ENCODE measurements at regions of chr3 and their contacts with region 1.

Region 1: DNA sequence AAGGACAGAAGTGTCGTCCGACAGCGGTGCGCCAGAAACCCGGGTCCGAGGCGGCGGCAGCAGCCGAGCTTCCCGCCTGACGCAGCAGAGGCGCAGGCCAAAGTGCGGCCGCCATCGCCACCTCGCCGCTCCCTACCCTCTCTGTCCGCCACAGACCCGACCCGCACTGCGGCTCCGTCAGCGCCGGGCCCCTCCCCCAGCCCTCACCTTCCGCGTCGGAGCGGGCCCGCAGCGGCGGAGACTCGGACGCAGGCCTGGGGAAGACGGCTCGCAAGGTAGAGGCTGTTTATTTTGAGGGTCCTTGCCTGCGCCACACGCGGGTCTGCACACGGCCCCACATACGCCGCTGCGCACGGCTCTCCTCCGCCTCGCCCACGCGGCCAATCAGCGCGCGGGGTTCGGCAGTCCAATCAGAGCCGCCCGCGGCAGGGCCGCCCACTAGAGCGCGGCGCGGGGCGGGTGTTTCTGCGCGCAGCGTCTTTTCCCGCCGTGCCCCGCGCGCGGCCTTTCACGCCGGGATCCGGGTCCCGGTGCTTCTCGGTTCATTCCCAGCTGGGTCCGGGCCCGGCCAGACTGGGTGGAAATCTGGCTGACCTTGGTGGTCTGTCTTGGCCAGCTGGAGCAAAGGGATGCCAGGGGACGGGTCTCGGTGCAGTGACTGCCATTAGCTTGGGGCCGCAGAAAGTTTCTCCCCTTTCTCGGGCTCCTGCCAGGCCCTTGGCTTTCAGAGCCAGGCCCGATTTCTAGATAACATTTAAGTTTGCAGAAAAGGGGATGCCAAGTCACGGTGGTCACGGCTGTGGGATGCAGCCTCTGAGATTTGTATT is at the start of gene CNBP:
- DNase-seq: peak; percentile 87 to 96 (median 93)
- ATAC-seq: peak; percentile 95 to 97
- H3K4me3 Mint-ChIP-seq: peak within 1 kb of the TSS; percentile 91 to 99 (median 96)
- H3K27ac Mint-ChIP-seq: peak within 1 kb of the TSS; percentile 92 to 100 (median 98)
- H3K4me1 Mint-ChIP-seq: peaks cover 14 to 50% (median 37%) of the 10 kb centered on the region in 4 donors
- H3K27me3 Mint-ChIP-seq: no peaks in the 10 kb centered on the region
- polyA plus RNA-seq, gene CNBP: 843 to 960 (median 927) TPM

Region 2: GRCh38 chr3:129160891-129161859 is 22.6 kb before region 1 on chr3 and contains the start of gene ISY1:
- POLR2A ChIA-PET with region 1: interaction called, 44 read pairs
- DNase-seq: peak; percentile 74 to 93 (median 87)
- ATAC-seq: peak; percentile 80 to 81
- H3K4me3 Mint-ChIP-seq: peak within 1 kb of the TSS; percentile 96 to 100 (median 98)
- H3K27ac Mint-ChIP-seq: peak within 1 kb of the TSS; percentile 98 to 100 (median 99)
- H3K4me1 Mint-ChIP-seq: peaks cover 12 to 48% (median 36%) of the 10 kb centered on the region in 4 donors
- H3K27me3 Mint-ChIP-seq: no peaks in the 10 kb centered on the region
- polyA plus RNA-seq, gene ISY1: 101 to 119 (median 107) TPM

Region 3: GRCh38 chr3:129173206-129173605 is 10.6 kb before region 1 on chr3:
- POLR2A ChIA-PET with region 1: interaction called, 10 read pairs
- DNase-seq: no peak
- ATAC-seq: no peak
- H3K4me3 Mint-ChIP-seq: peak overlapping the region in 9 of 10 donors; percentile 8 to 64 (median 48)
- H3K27ac Mint-ChIP-seq: peak overlapping the region in 6 of 10 donors; percentile 19 to 66 (median 37)
- H3K4me1 Mint-ChIP-seq: peaks cover 22 to 73% (median 65%) of the 10 kb centered on the region in 4 donors
- H3K27me3 Mint-ChIP-seq: no peaks in the 10 kb centered on the region

Region 4: DNA sequence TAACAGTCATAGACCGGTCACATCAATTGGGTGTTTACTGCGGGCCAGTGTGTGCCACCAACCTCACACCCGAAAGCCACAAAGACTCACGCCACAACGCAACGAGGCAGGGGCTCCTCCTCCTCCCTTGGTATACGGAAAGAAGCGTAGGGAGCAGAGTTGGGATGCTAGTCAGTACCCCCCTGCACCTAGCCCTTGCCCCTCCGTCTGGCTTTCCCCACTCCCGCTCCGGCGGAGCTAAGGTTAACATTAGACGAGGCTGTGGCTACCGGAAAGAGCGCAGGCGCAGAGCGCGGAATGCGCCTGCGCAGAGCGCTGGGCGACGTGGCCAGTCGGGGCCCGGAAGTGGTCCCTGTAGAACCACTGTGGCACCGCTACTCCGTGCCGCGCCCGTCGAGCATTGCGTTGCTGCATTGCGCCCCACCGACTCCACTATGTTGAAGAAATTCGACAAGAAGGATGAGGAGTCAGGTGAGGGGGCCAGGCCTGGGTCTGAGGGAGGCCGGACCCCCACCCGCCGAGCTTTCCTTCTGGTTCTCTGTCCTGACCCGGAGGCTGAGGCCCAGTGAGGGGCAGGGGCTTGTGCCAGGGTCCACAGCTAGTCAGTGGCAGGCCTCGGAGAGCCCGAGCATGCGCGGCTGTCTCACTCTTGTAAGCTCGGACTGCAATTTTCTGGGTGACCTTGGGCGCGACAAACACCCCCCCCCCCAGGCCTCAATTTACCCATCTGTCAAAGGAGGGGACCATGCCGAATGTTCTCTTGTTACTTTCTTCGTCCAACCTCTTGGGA is 65.7 kb after region 1 on chr3 and contains the start of gene COPG1:
- POLR2A ChIA-PET with region 1: interaction called, 10 read pairs
- DNase-seq: peak; percentile 78 to 92 (median 86)
- ATAC-seq: peak; percentile 82 to 88
- H3K4me3 Mint-ChIP-seq: peak within 1 kb of the TSS; percentile 93 to 99 (median 96)
- H3K27ac Mint-ChIP-seq: peak within 1 kb of the TSS; percentile 91 to 98 (median 97)
- H3K4me1 Mint-ChIP-seq: peaks cover 18 to 61% (median 42%) of the 10 kb centered on the region in 4 donors
- H3K27me3 Mint-ChIP-seq: no peaks in the 10 kb centered on the region
- polyA plus RNA-seq, gene COPG1: 54.0 to 75.5 (median 58.5) TPM

Measured in naive thymus-derived CD8-positive, alpha-beta T cell (primary cell).